Right lobe of liver (tissue), 6 donors: ENCODE measurements at regions of chr15 and their contacts with region 1.

Region 1: DNA sequence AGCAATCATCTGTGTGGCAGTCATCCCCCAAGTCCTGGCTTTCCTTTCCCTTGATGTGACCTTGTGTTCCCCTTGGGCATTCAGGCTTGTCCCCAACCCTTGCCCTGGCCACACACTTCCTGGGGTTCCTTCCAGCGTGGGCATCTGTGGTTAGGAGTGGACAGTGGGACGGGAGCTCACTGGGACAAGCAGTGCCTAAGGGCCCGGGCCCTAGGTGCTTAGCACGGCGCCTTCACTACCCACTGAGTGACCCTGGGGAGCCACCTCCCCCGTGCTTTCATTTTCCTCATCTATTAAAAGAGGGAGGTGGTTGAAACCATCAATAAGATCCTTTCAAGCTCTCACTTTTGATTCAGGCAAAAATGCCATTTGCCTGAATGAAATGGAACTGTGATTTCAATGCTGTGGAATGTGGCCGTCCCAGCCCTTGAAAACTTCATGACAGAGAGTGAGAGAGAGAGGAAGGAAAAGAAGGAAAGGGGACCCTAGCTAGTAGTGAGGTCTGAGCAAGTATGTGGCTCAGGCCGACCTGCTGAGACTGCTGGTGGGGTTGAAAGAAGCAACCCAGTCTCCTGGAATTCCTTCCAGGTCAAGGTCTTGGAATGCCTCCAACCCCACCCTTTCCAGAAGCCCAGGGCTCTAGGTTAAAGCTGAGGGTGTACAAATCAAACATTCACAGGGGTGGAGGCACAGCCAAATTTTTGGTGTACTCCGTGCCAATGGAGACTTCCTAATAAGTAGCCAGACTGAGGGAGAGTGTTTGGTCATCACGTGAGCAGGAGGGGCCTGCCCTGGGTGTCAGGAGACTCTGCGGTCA is 302.9 kb downstream of the TLE3 start:
- DNase-seq: no peak
- ATAC-seq: no peak
- H3K4me3 ChIP-seq: no peak overlapping the region
- H3K27ac ChIP-seq: no peak overlapping the region
- H3K4me1 ChIP-seq: no peaks in the 10 kb centered on the region
- H3K27me3 ChIP-seq: no peaks in the 10 kb centered on the region
- CTCF ChIP-seq: no peak
- POLR2A ChIP-seq: no peak

Region 2: DNA sequence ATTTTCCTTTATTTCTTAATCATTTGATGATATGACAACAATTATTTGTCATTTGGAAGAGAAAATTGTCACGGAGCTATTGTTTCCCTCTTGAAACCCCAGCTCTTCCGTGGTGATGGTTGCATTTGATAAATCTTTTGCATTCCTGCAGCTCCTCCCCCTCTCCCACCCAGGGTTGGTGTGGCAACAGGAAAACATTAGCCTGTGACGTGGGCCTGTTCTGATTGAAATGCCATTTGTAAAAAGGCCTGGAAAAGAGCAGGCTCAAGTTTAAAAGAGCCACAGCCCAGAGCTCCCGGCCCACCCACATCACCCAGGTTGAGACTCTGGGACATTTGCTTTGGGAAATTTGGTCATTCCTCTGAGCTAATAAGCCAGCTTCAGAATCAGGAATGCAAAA is 59.7 kb before region 1 on chr15:
- intact Hi-C with region 1: loop called in 1 of 2 experiments (anchors 10 kb)
- DNase-seq: no peak
- ATAC-seq: no peak
- H3K4me3 ChIP-seq: no peak overlapping the region
- H3K27ac ChIP-seq: no peak overlapping the region
- H3K4me1 ChIP-seq: peaks cover 0 to 3% (median 0%) of the 10 kb centered on the region in 4 donors
- H3K27me3 ChIP-seq: no peaks in the 10 kb centered on the region
- CTCF ChIP-seq: no peak
- POLR2A ChIP-seq: no peak